ENCODE measurements at regions of chr15 and their contacts with region 1.

Region 1: GRCh38 chr15:76285239-76285825 is 25.9 kb downstream of the ETFA start:
- DNase-seq: peak in 2 of 5 donors; percentile 2 to 4
- H3K4me3 ChIP-seq: no peak overlapping the region
- H3K4me3 Mint-ChIP-seq: no peak overlapping the region
- H3K27ac ChIP-seq: peak overlapping the region; percentile 41
- H3K27ac Mint-ChIP-seq: peak overlapping the region in 2 of 7 donors; percentile 37 to 78
- H3K4me1 ChIP-seq: peaks cover 35% of the 10 kb centered on the region
- H3K4me1 Mint-ChIP-seq: peaks cover 20 to 44% (median 29%) of the 10 kb centered on the region in 4 donors
- H3K27me3 ChIP-seq: no peaks in the 10 kb centered on the region
- H3K27me3 Mint-ChIP-seq: no peaks in the 10 kb centered on the region

Region 2: GRCh38 chr15:76190834-76191538 is 94.3 kb before region 1 on chr15:
- CTCF ChIA-PET with region 1: interaction called, 4 read pairs
- POLR2A ChIA-PET with region 1: no interaction called
- intact Hi-C with region 1: loop called (anchors 2 kb)
- DNase-seq: peak; percentile 49 to 58 (median 54)
- H3K4me3 ChIP-seq: peak overlapping the region in 1 of 2 donors; percentile 1
- H3K4me3 Mint-ChIP-seq: peak overlapping the region; percentile 35 to 74 (median 67)
- H3K27ac ChIP-seq: no peak overlapping the region
- H3K27ac Mint-ChIP-seq: peak overlapping the region in 3 of 7 donors; percentile 24 to 85 (median 44)
- H3K4me1 ChIP-seq: peaks cover 8% of the 10 kb centered on the region
- H3K4me1 Mint-ChIP-seq: peaks cover 8 to 14% (median 9%) of the 10 kb centered on the region in 4 donors
- H3K27me3 ChIP-seq: no peaks in the 10 kb centered on the region
- H3K27me3 Mint-ChIP-seq: peaks cover 10 to 18% of the 10 kb centered on the region in 2 donors

Region 3: GRCh38 chr15:76235186-76235826 is 50.0 kb before region 1 on chr15:
- CTCF ChIA-PET with region 1: interaction called, 3 read pairs
- POLR2A ChIA-PET with region 1: no interaction called
- intact Hi-C with region 1: loop called (anchors 10 kb)
- DNase-seq: peak in 4 of 5 donors; percentile 27 to 45 (median 33)
- H3K4me3 ChIP-seq: no peak overlapping the region
- H3K4me3 Mint-ChIP-seq: no peak overlapping the region
- H3K27ac ChIP-seq: no peak overlapping the region
- H3K27ac Mint-ChIP-seq: peak overlapping the region in 1 of 7 donors; percentile 36
- H3K4me1 ChIP-seq: no peaks in the 10 kb centered on the region
- H3K4me1 Mint-ChIP-seq: no peaks in the 10 kb centered on the region
- H3K27me3 ChIP-seq: no peaks in the 10 kb centered on the region
- H3K27me3 Mint-ChIP-seq: no peaks in the 10 kb centered on the region

Region 4: DNA sequence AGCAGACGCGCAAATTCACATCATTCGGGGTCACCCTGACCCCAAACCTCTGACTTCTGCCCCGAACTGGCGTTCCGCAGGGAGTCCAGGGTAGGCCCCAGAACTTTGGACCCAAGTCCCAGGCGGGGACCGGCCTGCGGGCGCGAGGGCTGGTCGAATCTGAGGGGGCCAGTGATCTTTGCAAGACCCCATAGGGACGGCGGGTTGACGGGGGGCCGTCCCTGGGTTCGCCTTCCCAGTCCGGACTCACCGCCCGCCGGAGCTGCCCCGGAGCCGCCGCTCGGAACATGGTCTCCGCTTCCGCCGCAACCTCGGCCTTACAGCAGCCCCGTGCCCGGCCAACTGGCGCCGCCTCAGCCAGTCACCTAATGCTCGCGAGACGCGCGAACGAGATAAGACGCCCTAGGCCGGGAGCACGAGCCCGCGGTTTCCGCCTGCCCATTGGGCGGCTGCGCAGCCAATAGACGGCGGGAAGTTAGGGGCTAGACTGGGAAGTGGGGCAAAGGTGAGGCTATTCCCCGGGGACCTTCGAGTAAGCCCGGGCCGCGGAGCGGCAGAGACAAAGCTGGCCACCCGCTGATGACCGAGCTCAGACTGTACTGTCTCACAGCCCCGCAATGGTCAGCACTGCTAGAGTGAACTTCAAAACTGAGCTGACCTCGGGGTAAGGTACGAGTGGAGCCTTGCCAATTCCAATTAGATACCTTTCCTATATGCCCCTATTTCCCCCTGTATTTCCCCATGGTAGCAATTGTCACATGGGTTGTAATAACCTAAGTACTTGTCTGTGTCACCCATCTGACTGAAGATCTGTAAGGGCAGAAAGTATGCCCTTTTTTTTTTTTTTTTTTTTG is 26.0 kb after region 1 on chr15 and contains the start of gene ETFA:
- CTCF ChIA-PET with region 1: interaction called, 5 read pairs
- POLR2A ChIA-PET with region 1: interaction called, 4 read pairs
- intact Hi-C with region 1: loop called (anchors 1 kb)
- DNase-seq: peak; percentile 81 to 86 (median 84)
- H3K4me3 ChIP-seq: peak within 1 kb of the TSS; percentile 51 to 74
- H3K4me3 Mint-ChIP-seq: peak within 1 kb of the TSS; percentile 88 to 96 (median 92)
- H3K27ac ChIP-seq: peak within 1 kb of the TSS; percentile 72
- H3K27ac Mint-ChIP-seq: peak within 1 kb of the TSS; percentile 59 to 94 (median 91)
- H3K4me1 ChIP-seq: peaks cover 21% of the 10 kb centered on the region
- H3K4me1 Mint-ChIP-seq: peaks cover 22 to 44% (median 33%) of the 10 kb centered on the region in 4 donors
- H3K27me3 ChIP-seq: no peaks in the 10 kb centered on the region
- H3K27me3 Mint-ChIP-seq: peaks cover 0 to 1% of the 10 kb centered on the region in 2 donors
- total RNA-seq, gene ETFA: 47.7 to 49.4 TPM

Region 5: GRCh38 chr15:76330080-76330680 is 44.8 kb after region 1 on chr15:
- CTCF ChIA-PET with region 1: no interaction called
- POLR2A ChIA-PET with region 1: no interaction called
- intact Hi-C with region 1: no loop called
- DNase-seq: no peak
- H3K4me3 ChIP-seq: no peak overlapping the region
- H3K4me3 Mint-ChIP-seq: no peak overlapping the region
- H3K27ac ChIP-seq: no peak overlapping the region
- H3K27ac Mint-ChIP-seq: no peak overlapping the region
- H3K4me1 ChIP-seq: peaks cover under 1% of the 10 kb centered on the region
- H3K4me1 Mint-ChIP-seq: peaks cover 2 to 8% (median 3%) of the 10 kb centered on the region in 4 donors
- H3K27me3 ChIP-seq: peaks cover 7% of the 10 kb centered on the region
- H3K27me3 Mint-ChIP-seq: peaks cover 35 to 58% of the 10 kb centered on the region in 2 donors